ENCODE measurements at regions of chr17 and their contacts with region 1.

Region 1: DNA sequence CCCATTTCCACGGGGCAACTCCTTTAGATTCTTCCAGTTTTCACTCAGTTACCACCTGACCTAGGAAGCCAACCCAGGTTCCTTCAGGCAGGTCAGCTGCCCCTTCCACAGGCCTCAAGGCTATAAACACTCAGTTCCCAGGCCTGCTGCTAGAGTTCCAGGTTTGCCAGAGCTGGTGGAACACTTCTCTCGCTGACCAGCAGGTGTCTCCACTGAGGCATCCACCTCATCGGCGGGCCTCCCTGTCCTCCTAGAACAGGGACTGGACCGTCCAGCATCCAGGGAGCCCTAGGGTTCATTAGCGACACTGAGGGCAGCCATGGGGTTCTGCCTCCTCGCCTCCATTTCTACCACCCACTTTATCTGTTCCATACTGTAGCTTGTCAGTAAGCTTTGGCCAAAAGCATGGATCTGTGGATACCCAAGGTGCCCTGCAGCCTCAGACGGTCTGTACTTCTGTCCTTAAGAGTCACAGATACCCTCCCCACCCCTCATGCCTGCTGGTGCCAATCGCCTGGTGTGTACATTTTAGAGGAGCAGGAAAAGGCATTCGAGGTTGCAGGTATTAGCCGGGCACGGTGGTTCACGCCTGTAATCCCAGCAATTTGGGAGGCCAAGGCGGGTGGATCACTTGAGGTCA is 29.0 kb downstream of the PIMREG start:
- DNase-seq: peak; percentile 80 to 82
- H3K4me3 ChIP-seq: no peak overlapping the region
- H3K27ac ChIP-seq: no peak overlapping the region
- H3K4me1 ChIP-seq: no peaks in the 10 kb centered on the region
- H3K27me3 ChIP-seq: no peaks in the 10 kb centered on the region
- CTCF ChIP-seq: peak; percentile 81 to 96 (median 90)
- POLR2A ChIP-seq: no peak

Region 2: DNA sequence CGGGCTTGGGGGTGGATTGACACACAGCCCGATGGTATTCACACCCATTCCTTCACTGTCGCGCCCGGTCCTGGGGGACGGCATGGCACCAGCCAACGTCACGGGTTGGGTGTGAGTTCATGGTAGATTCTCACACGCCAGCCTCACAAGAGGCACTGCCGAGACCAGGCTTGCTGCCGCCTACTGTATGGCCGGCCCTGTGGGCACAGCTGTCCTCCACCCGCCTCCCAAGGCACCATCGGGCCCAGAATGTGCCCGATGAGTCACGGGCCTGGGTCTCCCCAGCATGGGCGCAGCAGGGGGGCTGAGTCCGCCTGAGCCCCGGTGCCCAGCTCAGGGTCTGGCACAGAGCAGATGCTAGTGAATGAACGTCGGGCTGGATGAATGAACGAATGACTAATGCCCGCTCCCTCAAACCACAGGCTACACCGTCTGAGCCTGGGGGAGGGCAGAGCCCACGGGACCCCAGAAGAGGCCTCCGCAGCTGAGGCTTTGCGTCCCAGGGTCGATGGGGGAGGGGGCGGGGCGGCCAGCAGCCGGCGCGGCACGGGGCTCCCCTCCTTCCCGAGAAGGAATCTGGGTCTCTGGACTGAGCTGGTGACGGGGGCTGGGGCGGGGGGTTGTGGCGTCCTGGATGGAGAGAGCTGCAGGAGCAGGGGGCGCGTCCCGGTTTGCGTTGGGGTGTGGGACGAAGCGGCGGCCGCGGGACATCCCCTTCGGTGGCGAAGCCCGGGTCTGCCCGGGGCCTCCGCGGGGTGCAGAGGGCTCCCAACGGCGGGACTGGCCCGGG is 82.3 kb after region 1 on chr17:
- intact Hi-C with region 1: loop called (anchors 5 kb)
- DNase-seq: peak; percentile 35 to 45
- H3K4me3 ChIP-seq: peak overlapping the region; percentile 35 to 54 (median 46)
- H3K27ac ChIP-seq: peak overlapping the region in 1 of 3 donors; percentile 49
- H3K4me1 ChIP-seq: peaks cover 24 to 29% of the 10 kb centered on the region in 2 donors
- H3K27me3 ChIP-seq: no peaks in the 10 kb centered on the region
- CTCF ChIP-seq: no peak
- POLR2A ChIP-seq: no peak

Region 3: GRCh38 chr17:6574687-6575595 is 101.7 kb after region 1 on chr17:
- intact Hi-C with region 1: loop called (anchors 5 kb)
- DNase-seq: peak; percentile 57 to 61
- H3K4me3 ChIP-seq: no peak overlapping the region
- H3K27ac ChIP-seq: peak overlapping the region; percentile 10 to 73 (median 21)
- H3K4me1 ChIP-seq: peaks cover 17% of the 10 kb centered on the region in 2 donors
- H3K27me3 ChIP-seq: no peaks in the 10 kb centered on the region
- CTCF ChIP-seq: peak in 3 of 6 experiments; percentile 31 to 46 (median 33)
- POLR2A ChIP-seq: no peak

Measured in thyroid gland (tissue), 4 donors.